Left colon (tissue), 2 donors: ENCODE measurements at regions of chr4 and their contacts with region 1.

Region 1: DNA sequence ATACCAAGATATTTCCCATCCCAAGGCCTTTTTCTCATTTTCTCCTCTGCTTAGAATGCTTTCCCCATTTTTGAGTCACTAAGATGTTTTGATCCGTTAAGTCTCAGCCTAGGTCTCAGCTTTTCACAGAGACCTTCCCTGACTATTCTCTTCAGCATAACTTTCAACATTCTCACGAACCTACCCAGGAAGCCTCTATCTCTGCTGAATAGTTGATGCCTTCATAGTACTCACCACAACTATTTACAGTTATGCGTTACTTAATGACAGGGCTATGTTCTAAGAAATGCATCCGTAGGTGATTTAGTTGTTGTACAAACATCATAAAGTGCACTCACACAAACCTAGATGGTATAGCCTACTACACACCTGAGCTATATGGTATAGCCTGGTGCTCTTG is 64.5 kb downstream of the ARL9 start:
- DNase-seq: no peak
- ATAC-seq: no peak

Region 2: DNA sequence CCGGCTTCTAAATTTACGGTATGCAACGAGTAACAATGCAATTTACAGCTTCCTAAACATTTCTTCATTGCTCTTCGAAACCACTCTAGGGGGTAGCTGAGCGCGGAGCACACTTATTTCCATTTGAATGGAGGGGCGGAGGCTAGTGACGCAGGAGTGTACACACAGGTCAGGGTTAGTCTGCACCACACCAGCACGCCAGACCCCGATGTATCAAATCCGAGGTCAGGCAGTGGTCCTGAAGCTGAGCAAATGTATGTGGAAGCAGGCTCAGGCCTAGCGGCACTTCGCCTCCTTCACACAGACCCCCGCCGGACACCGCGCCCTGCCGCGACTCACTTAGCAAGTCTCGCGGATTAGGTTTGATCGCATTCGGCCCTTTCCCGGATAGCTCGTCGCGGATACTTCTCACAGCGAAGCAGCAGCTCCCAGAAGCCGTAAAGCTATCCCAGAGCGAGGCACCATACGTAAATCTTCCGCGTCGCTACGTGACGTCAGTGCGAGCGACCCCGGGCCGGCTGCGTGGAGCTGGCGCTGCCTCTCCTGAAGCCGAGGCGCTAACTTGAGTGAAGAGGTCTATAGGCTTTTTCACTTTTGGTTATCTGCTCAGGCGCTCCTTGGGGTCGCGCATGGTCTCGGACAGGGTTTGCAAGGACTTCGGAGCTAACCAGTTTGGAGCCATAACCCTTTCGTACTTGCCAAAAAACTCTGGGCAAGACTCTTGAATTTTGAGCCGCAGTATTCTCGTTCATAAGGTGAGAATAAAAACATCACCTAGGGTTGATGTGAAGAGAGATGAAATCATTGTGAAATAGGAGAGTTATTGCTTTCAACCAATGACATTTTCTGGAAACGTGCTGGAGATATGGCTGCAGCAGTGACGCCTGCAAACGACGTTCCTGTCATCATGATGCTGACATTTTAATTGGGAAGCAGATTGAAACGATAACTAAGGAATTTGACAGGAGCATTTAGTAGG is 182.7 kb before region 1 on chr4 and contains the start of gene AASDH:
- intact Hi-C with region 1: no loop called
- DNase-seq: peak; percentile 90 to 95
- ATAC-seq: peak; percentile 95
- total RNA-seq, gene AASDH: 6.5 to 9.8 TPM

Region 3: DNA sequence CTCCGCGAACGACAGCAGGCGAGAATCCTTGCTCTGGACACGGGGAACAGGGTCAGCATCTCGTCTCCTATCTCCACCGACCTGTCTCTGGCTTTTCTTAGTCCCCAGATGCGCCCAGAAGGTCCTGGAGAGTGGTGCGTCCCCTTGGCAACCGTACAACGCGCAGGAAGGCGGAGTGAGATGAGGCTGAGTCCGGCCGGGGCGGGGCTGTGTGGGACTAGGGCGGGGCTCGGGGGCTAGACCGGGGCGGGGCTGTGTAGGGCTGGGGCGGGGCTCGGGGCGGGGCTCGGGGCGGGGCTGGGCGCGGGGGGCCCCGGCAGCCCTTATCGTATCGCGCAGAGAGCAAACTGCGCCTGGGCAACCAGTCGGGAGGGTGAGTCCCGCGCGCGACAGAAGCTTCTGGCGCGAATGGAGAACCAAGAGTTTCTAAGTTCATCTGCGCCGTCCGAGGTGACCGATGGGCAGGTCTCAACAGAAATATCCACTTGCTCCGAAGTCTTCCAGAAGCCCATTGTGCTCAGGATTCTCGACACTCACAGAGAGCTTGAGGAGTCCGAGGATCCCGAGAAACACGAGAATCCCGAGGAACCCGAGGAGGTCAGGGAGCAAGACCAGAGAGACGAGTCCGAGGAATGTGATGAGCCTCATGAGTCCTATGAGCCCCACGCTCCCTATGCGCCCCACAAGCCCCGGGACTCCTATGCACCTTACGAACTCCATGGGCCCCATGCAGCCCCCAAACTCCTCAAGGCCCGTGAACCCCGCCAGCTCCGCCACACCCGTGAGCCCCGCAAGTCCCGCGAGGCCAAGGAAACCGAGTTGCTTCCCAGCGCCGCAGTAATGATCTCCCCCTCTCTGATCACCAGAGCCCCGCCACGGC is 39.5 kb before region 1 on chr4:
- intact Hi-C with region 1: no loop called
- DNase-seq: peak; percentile 87 to 91
- ATAC-seq: peak; percentile 100

Region 4: GRCh38 chr4:56641494-56642051 is 71.5 kb after region 1 on chr4:
- intact Hi-C with region 1: no loop called
- DNase-seq: no peak
- ATAC-seq: no peak

Region 5: GRCh38 chr4:56806666-56807065 is 236.6 kb after region 1 on chr4:
- intact Hi-C with region 1: loop called in 1 of 2 experiments (anchors 5 kb)
- DNase-seq: no peak
- ATAC-seq: no peak